Posterior cingulate gyrus (tissue), 11 donors: ENCODE measurements at regions of chr1 and their contacts with region 1.

Region 1: GRCh38 chr1:171898941-171899340 is 57.6 kb downstream of the DNM3 start:
- DNase-seq: peak; percentile 66 to 98 (median 78)

Region 2: GRCh38 chr1:171929121-171929520 is 30.2 kb after region 1 on chr1:
- intact Hi-C with region 1: no loop called
- DNase-seq: no peak

Region 3: DNA sequence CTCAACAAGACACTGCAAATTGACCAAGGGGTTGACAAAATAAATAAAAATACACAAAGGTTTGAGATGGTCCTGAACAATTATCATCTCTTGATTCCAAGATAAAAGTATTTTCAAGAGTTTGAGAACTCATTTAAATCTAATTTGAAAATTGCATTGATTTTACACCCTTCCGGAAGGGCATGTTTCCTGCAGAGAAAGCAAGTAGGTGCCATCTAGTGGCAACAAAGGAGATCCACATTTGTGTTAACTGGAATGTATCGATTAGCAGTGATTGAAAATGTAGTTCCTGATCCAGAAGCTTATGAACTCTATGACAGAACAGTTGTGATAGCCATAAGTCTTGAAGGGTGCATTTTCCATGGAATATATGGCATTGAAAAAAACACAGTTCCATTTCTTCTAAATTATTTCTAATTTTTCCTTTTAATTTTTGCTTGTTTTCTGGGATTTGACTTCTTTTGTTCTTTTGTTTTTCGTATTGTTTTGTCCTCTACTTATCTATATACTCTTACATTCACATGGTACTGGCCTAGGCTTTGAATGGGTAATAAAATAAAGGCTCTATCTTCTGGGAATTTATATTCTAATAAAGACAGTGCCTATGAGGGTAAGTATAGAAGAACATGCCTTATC is 86.0 kb after region 1 on chr1:
- intact Hi-C with region 1: loop called (anchors 10 kb)
- DNase-seq: no peak

Region 4: GRCh38 chr1:172019976-172020375 is 121.0 kb after region 1 on chr1:
- intact Hi-C with region 1: no loop called
- DNase-seq: no peak